GM18951 (cell line): ENCODE measurements at regions of chr19 and their contacts with region 1.

Region 1: DNA sequence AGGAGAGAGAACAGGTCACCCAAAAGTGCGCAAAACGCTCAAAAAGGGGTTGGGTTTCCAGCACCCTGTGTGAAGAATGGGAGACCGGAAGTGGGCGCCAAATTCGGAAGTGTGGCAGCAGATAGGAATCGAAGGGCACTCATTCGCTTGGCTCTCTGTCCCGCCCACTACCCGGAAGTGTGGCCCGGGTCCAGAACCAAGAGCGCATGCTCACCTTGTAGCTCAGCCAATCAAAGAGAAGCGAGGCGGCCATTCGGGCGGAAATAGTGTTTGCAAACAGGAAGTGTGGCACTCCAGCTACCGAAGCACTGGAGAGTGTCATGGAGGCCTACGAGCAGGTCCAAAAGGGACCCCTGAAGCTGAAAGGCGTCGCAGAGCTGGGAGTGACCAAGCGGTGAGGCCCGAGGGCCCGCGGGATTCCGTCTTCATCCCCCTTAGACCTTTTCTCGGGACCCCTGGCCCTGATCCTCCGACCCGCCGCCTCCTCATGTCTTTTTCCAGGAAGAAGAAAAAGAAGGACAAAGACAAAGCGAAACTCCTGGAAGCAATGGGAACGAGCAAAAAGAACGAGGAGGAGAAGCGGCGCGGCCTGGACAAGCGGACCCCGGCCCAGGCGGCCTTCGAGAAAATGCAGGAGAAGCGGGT is at the start of gene FAM32A:
- POLR2A ChIP-seq: peak; percentile 70

Region 2: DNA sequence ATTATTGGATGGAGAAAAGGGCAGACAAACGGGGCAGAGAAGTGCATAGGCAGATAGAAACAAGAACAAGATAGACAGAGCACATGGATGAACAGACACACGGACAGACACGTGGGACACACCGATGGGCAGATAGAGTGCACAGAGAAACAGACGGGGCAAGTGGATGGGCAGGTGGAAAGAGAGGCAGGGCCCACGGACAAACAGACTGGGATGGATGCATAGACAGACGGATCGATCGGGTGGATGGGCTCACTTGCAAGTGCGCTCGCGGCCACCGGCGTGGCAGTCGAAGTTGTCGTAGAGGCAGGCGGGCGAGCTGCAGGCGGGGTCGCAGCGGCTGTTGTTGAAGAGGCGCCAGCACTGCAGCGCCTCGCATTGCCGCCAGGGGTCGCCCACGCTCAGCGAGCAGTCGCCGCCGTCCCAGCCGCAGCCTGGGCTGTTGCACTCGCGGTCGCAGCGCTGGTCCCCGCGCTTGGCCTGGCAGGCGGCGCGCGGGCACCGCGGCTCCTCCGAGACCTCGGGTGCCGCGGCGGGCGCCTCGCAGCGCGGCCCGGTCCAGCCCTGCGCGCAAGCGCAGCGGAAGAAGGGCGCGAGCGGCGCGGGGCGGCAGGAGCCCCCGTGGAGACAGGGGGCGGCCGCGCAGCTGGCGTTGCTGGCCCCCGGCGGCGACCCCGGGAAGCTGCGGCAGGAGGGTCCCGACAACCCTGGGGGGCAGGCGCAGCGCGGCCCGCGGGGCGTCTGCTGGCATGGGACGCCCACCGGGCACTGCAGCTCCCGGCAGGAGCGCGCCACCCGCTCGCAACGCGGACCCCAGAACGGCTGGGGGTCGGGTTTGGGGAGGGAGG is 1007.8 kb before region 1 on chr19:
- in situ Hi-C with region 1: no loop called
- POLR2A ChIP-seq: no peak

Region 3: GRCh38 chr19:15623711-15624318 is 561.4 kb before region 1 on chr19:
- in situ Hi-C with region 1: loop called (anchors 25 kb)
- POLR2A ChIP-seq: no peak

Region 4: DNA sequence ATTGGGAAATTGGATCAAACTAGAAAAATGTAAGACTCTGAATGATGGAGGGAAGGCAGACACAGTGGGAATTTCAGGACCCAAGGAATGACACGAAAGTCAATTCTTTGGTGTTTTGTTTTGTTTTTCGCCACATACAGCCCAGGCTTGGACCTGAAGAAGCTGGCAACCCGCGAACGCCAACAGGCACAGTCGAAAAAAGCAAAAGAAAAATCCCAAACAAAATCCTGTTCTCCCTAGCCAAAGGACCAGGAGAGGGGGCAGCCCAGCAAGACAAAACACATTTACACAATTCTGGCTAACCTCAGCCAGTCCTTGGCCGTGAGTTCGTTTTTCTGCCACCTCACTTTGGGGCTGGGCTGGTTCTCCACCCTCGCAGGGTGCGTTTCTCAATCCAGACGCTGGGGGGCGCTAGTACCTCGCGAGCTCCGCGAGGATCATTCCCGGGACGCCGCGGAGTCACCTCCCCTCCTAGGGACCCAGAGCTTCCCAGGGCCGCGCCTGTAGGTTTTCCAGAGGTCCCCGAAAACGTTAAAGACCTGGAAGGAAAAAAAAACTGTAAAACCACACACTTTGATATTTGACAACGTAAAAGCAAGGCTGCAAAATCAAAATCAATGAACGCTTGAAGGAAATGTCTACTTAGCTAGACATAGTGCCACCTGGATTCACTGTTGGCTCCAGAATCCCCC is 143.8 kb before region 1 on chr19:
- in situ Hi-C with region 1: loop called (anchors 10 kb)
- POLR2A ChIP-seq: no peak